Cardiac septum (tissue), 1 donor: ENCODE measurements at regions of chr20 and their contacts with region 1.

Region 1: GRCh38 chr20:561437-562231 is 18.0 kb upstream of the CSNK2A1 start:
- DNase-seq: no peak

Region 2: GRCh38 chr20:645318-646106 is 83.9 kb after region 1 on chr20:
- intact Hi-C with region 1: loop called (anchors 2 kb)
- DNase-seq: peak; percentile 89

Region 3: GRCh38 chr20:739736-740135 is 178.1 kb after region 1 on chr20:
- intact Hi-C with region 1: loop called (anchors 1 kb)
- DNase-seq: no peak